Endothelial cell of umbilical vein (primary cell): ENCODE measurements at regions of chr6 and their contacts with region 1.

Region 1: GRCh38 chr6:54112151-54112650 is 958 bp downstream of the MLIP start:
- DNase-seq: peak; percentile 91
- H3K4me3 ChIP-seq: peak overlapping the region in 1 of 3 experiments; percentile 28
- H3K27ac ChIP-seq: peak overlapping the region; percentile 89
- H3K4me1 ChIP-seq: peaks cover 38% of the 10 kb centered on the region
- H3K27me3 ChIP-seq: no peaks in the 10 kb centered on the region
- CTCF ChIP-seq: no peak
- POLR2A ChIP-seq: peak; percentile 56

Region 2: GRCh38 chr6:54053881-54054391 is 58.3 kb before region 1 on chr6:
- CTCF ChIA-PET with region 1: interaction called, 5 read pairs
- POLR2A ChIA-PET with region 1: no interaction called
- dilution Hi-C with region 1: no loop called
- intact Hi-C with region 1: loop called (anchors 1 kb)
- DNase-seq: peak; percentile 82
- H3K4me3 ChIP-seq: peak overlapping the region in 2 of 3 experiments; percentile 26 to 41
- H3K27ac ChIP-seq: no peak overlapping the region
- H3K4me1 ChIP-seq: peaks cover 10% of the 10 kb centered on the region
- H3K27me3 ChIP-seq: no peaks in the 10 kb centered on the region
- CTCF ChIP-seq: no peak
- POLR2A ChIP-seq: no peak

Region 3: GRCh38 chr6:54156650-54157250 is 44.5 kb after region 1 on chr6:
- CTCF ChIA-PET with region 1: no interaction called
- POLR2A ChIA-PET with region 1: no interaction called
- dilution Hi-C with region 1: no loop called
- intact Hi-C with region 1: no loop called
- DNase-seq: no peak
- H3K4me3 ChIP-seq: no peak overlapping the region
- H3K27ac ChIP-seq: no peak overlapping the region
- H3K4me1 ChIP-seq: no peaks in the 10 kb centered on the region
- H3K27me3 ChIP-seq: no peaks in the 10 kb centered on the region
- CTCF ChIP-seq: no peak
- POLR2A ChIP-seq: no peak

Region 4: GRCh38 chr6:54191461-54191860 is 79.3 kb after region 1 on chr6:
- CTCF ChIA-PET with region 1: interaction called, 4 read pairs
- POLR2A ChIA-PET with region 1: interaction called, 4 read pairs
- dilution Hi-C with region 1: no loop called
- intact Hi-C with region 1: loop called (anchors 1 kb)
- DNase-seq: peak; percentile 79
- H3K4me3 ChIP-seq: no peak overlapping the region
- H3K27ac ChIP-seq: no peak overlapping the region
- H3K4me1 ChIP-seq: peaks cover 25% of the 10 kb centered on the region
- H3K27me3 ChIP-seq: no peaks in the 10 kb centered on the region
- CTCF ChIP-seq: no peak
- POLR2A ChIP-seq: no peak

Region 5: GRCh38 chr6:54291146-54291545 is 178.9 kb after region 1 on chr6:
- CTCF ChIA-PET with region 1: no interaction called
- POLR2A ChIA-PET with region 1: no interaction called
- dilution Hi-C with region 1: no loop called
- intact Hi-C with region 1: loop called (anchors 1 kb)
- DNase-seq: peak; percentile 94
- H3K4me3 ChIP-seq: no peak overlapping the region
- H3K27ac ChIP-seq: peak overlapping the region; percentile 95
- H3K4me1 ChIP-seq: peaks cover 33% of the 10 kb centered on the region
- H3K27me3 ChIP-seq: no peaks in the 10 kb centered on the region
- CTCF ChIP-seq: no peak
- POLR2A ChIP-seq: peak; percentile 22